ENCODE measurements at regions of chr3 and their contacts with region 1.

Region 1: GRCh38 chr3:112734718-112735350 is 93.9 kb upstream of the CCDC80 start:
- DNase-seq: peak; percentile 77
- ATAC-seq: peak; percentile 93
- H3K4me3 ChIP-seq: peak overlapping the region; percentile 13 to 27; a peak in 2 of 4 replicates
- H3K27ac ChIP-seq: no peak overlapping the region
- H3K4me1 ChIP-seq: peaks cover 0 to 7% of the 10 kb centered on the region in 2 experiments; a peak in 2 of 4 replicates
- H3K27me3 ChIP-seq: no peaks in the 10 kb centered on the region
- CTCF ChIP-seq: peak; percentile 65 to 91 (median 74)
- POLR2A ChIP-seq: no peak
- RAD21 ChIP-seq: peak; percentile 78

Region 2: GRCh38 chr3:112746675-112747280 is 11.9 kb after region 1 on chr3:
- CTCF ChIA-PET with region 1: interaction called, 16 read pairs
- POLR2A ChIA-PET with region 1: no interaction called
- RAD21 ChIA-PET with region 1: no interaction called
- intact Hi-C with region 1: no loop called
- DNase-seq: no peak
- ATAC-seq: no peak
- H3K4me3 ChIP-seq: no peak overlapping the region
- H3K27ac ChIP-seq: no peak overlapping the region
- H3K4me1 ChIP-seq: no peaks in the 10 kb centered on the region
- H3K27me3 ChIP-seq: no peaks in the 10 kb centered on the region
- CTCF ChIP-seq: no peak
- POLR2A ChIP-seq: no peak
- RAD21 ChIP-seq: no peak

Region 3: DNA sequence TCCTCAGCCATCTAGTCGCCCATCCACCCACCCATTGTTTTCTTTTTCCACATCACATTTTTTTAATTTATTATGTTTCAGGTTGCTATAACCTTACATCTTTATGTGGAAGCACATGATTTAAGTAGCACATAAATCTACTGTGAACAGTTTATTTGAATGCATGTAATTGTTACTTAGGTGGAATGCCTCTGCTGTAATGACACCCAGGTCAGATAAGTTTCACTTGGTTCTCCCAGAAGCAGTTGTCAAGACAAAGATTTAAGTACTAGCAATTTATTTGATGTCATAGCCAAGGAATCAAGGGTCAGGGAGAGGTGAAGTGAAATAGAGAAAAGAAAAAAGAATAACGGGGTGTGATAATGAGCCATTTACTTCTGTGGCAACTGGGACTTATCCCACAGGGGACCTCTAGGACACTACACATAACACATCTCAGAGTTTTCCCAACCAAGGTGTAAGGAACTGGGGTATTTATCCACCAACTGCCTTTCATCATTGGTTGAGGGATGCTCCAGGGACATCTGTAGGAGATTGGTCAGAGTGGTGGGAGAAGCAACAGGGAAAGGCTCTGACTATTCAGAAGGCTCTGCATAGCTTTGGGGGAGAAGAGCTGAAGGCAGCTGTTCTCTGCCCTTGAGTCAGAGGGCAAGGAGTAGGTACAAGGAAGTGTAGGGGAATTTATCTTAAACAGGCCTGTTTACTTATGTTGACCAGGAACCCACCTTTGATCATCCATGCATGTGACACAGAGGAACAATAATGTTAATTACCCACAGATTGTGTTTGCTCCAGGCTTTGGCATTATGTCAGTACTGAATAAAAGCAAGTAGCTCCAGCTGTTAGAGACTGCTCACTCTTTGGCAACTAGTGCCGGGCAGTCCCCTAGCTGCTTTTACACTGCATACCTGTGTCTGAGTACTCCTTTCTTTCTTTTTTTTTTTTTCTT is 17.0 kb after region 1 on chr3:
- CTCF ChIA-PET with region 1: interaction called, 16 read pairs
- POLR2A ChIA-PET with region 1: no interaction called
- RAD21 ChIA-PET with region 1: no interaction called
- intact Hi-C with region 1: no loop called
- DNase-seq: no peak
- ATAC-seq: no peak
- H3K4me3 ChIP-seq: no peak overlapping the region
- H3K27ac ChIP-seq: no peak overlapping the region
- H3K4me1 ChIP-seq: no peaks in the 10 kb centered on the region
- H3K27me3 ChIP-seq: no peaks in the 10 kb centered on the region
- CTCF ChIP-seq: no peak
- POLR2A ChIP-seq: no peak
- RAD21 ChIP-seq: no peak

Region 4: GRCh38 chr3:112786002-112786590 is 51.3 kb after region 1 on chr3:
- CTCF ChIA-PET with region 1: interaction called, 10 read pairs
- POLR2A ChIA-PET with region 1: no interaction called
- RAD21 ChIA-PET with region 1: no interaction called
- intact Hi-C with region 1: no loop called
- DNase-seq: no peak
- ATAC-seq: no peak
- H3K4me3 ChIP-seq: no peak overlapping the region
- H3K27ac ChIP-seq: no peak overlapping the region
- H3K4me1 ChIP-seq: no peaks in the 10 kb centered on the region
- H3K27me3 ChIP-seq: no peaks in the 10 kb centered on the region
- CTCF ChIP-seq: no peak
- POLR2A ChIP-seq: no peak
- RAD21 ChIP-seq: no peak

Region 5: GRCh38 chr3:112814266-112814665 is 79.4 kb after region 1 on chr3:
- CTCF ChIA-PET with region 1: interaction called, 28 read pairs
- POLR2A ChIA-PET with region 1: no interaction called
- RAD21 ChIA-PET with region 1: interaction called in 1 of 2 experiments, 4 read pairs
- intact Hi-C with region 1: loop called (anchors 2 kb)
- DNase-seq: peak; percentile 21
- ATAC-seq: peak; percentile 72
- H3K4me3 ChIP-seq: no peak overlapping the region
- H3K27ac ChIP-seq: no peak overlapping the region
- H3K4me1 ChIP-seq: no peaks in the 10 kb centered on the region
- H3K27me3 ChIP-seq: 0 out of 2 replicates have a peak, but pooled peaks cover 5% of the 10 kb centered on the region
- CTCF ChIP-seq: peak; percentile 34 to 51 (median 41); a peak in 3 of 6 replicates
- POLR2A ChIP-seq: no peak
- RAD21 ChIP-seq: peak; percentile 65

Region 6: GRCh38 chr3:112979240-112979832 is 244.5 kb after region 1 on chr3:
- CTCF ChIA-PET with region 1: interaction called, 32 read pairs
- POLR2A ChIA-PET with region 1: interaction called, 8 read pairs
- RAD21 ChIA-PET with region 1: interaction called, 4 to 6 read pairs
- intact Hi-C with region 1: loop called (anchors 1 kb)
- DNase-seq: peak; percentile 13
- ATAC-seq: peak; percentile 34; the same call in 1 of the 2 replicates
- H3K4me3 ChIP-seq: no peak overlapping the region
- H3K27ac ChIP-seq: no peak overlapping the region
- H3K4me1 ChIP-seq: no peaks in the 10 kb centered on the region
- H3K27me3 ChIP-seq: no peaks in the 10 kb centered on the region
- CTCF ChIP-seq: peak; percentile 42 to 77 (median 66); a peak in 5 of 6 replicates
- POLR2A ChIP-seq: no peak
- RAD21 ChIP-seq: peak; percentile 69

Region 7: GRCh38 chr3:112984485-112984884 is 249.7 kb after region 1 on chr3:
- CTCF ChIA-PET with region 1: interaction called, 32 read pairs
- POLR2A ChIA-PET with region 1: interaction called, 8 read pairs
- RAD21 ChIA-PET with region 1: interaction called, 4 to 6 read pairs
- intact Hi-C with region 1: loop called (anchors 1 kb)
- DNase-seq: no peak
- ATAC-seq: no peak
- H3K4me3 ChIP-seq: no peak overlapping the region
- H3K27ac ChIP-seq: no peak overlapping the region
- H3K4me1 ChIP-seq: no peaks in the 10 kb centered on the region
- H3K27me3 ChIP-seq: no peaks in the 10 kb centered on the region
- CTCF ChIP-seq: no peak
- POLR2A ChIP-seq: no peak
- RAD21 ChIP-seq: no peak

Region 8: GRCh38 chr3:113312416-113312815 is 577.6 kb after region 1 on chr3:
- CTCF ChIA-PET with region 1: no interaction called
- POLR2A ChIA-PET with region 1: no interaction called
- RAD21 ChIA-PET with region 1: no interaction called
- intact Hi-C with region 1: no loop called
- DNase-seq: no peak
- ATAC-seq: no peak
- H3K4me3 ChIP-seq: no peak overlapping the region
- H3K27ac ChIP-seq: no peak overlapping the region
- H3K4me1 ChIP-seq: no peaks in the 10 kb centered on the region
- H3K27me3 ChIP-seq: no peaks in the 10 kb centered on the region
- CTCF ChIP-seq: no peak
- POLR2A ChIP-seq: no peak
- RAD21 ChIP-seq: no peak